ENCODE measurements at regions of chr19 and their contacts with region 1.

Region 1: GRCh38 chr19:45092747-45093678 is at the start of gene PPP1R37:
- DNase-seq: peak; percentile 81
- ATAC-seq: peak; percentile 69
- H3K4me3 Mint-ChIP-seq: peak within 1 kb of the TSS; percentile 93
- H3K27ac Mint-ChIP-seq: peak within 1 kb of the TSS; percentile 99
- H3K4me1 Mint-ChIP-seq: peaks cover 54% of the 10 kb centered on the region
- H3K27me3 Mint-ChIP-seq: no peaks in the 10 kb centered on the region
- CTCF ChIP-seq: no peak
- total RNA-seq, gene PPP1R37: 18.8 and 27.2 TPM in 2 replicates

Region 2: GRCh38 chr19:44476559-44477408 is 616.2 kb before region 1 on chr19:
- CTCF ChIA-PET with region 1: no interaction called
- POLR2A ChIA-PET with region 1: no interaction called
- intact Hi-C with region 1: no loop called
- DNase-seq: no peak
- ATAC-seq: no peak
- H3K4me3 Mint-ChIP-seq: no peak overlapping the region
- H3K27ac Mint-ChIP-seq: peak overlapping the region; percentile 68
- H3K4me1 Mint-ChIP-seq: no peaks in the 10 kb centered on the region
- H3K27me3 Mint-ChIP-seq: no peaks in the 10 kb centered on the region
- CTCF ChIP-seq: no peak

Region 3: DNA sequence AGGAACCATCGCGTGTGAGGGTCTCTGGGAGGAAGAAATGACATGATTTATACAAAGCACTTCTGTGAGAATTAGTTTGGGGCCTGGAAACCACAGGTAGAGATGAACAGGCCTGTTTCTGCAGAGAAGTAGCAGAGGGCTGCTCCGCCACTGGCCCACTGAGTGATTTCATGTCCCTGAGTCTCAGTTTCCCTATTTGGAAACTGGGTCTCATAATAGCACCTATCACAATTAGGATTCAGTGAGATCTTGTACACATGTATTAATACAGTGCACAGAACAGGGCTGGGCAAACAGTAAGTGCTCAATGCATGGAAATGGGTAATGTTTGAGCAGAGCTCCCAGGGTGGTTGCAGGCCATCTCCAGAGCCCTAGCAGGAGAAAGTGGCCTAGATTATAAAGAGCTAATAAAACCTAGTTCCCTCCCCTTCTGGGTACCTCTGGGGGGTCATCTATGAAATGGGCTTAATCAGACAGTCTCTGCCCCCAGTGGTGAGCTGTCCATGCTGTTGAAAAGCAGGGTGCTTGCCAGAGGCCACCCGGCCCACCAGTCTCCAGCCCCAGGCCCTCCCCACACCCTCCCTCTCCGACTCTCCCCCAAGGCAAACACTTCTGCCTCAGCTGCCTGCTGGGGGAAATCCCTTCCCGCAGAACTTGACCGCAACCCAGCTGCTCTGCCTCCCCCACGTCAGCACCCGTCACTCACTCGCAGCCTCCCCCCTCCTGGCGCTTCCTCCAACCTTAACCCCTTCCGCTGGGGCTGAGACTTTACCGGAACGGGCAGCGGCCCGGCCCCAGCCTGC is 340.0 kb before region 1 on chr19:
- CTCF ChIA-PET with region 1: no interaction called
- POLR2A ChIA-PET with region 1: interaction called, 4 read pairs
- intact Hi-C with region 1: loop called (anchors 5 kb)
- DNase-seq: peak; percentile 87
- ATAC-seq: peak; percentile 76
- H3K4me3 Mint-ChIP-seq: peak overlapping the region; percentile 95
- H3K27ac Mint-ChIP-seq: peak overlapping the region; percentile 96
- H3K4me1 Mint-ChIP-seq: peaks cover 68% of the 10 kb centered on the region
- H3K27me3 Mint-ChIP-seq: no peaks in the 10 kb centered on the region
- CTCF ChIP-seq: no peak

Region 4: DNA sequence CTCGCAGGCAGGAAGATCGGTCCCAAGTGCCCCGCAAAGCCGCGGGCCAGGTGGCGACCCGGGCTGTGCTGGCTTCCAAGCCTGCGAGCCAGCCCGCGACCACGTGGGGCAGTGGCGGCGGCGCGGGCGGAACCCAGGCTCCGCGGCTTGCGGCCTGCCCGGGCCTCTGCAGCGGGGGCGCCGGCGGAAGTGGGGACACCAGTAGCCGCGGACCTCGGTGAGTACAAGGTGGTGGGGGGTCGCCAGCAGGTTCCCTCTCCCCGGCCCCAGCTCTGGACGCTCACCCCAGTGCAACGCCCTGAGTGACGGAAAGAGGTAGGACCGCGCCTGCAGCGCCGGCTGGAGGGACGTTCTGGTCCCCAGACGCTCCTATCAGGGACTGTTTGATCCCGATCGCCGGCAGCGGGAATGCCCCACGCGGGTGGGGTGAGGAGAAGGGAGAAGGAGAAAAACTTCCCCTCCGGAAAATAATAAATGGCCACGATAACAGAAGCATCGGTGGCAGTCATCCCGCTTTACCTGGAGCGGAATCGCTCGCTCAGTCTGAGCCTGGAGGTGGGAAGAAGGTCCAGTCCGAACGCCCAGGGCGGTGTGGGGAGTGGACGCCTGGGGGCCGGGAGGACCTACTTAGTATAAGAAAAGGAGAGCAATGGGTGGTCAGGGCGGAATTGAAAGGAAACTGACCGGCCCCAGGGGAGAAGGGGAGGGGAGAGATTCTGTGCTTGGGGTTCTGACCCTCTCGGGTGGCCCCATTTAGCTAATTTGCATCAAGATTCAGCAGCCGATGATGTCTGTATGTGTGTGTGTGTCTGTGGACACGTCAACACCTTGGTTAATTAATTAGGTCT is 13.7 kb before region 1 on chr19 and contains the start of gene GEMIN7:
- CTCF ChIA-PET with region 1: no interaction called
- POLR2A ChIA-PET with region 1: interaction called, 75 read pairs
- intact Hi-C with region 1: loop called (anchors 1 kb)
- DNase-seq: peak; percentile 85
- ATAC-seq: peak; percentile 33
- H3K4me3 Mint-ChIP-seq: peak within 1 kb of the TSS; percentile 97
- H3K27ac Mint-ChIP-seq: peak within 1 kb of the TSS; percentile 90
- H3K4me1 Mint-ChIP-seq: peaks cover 60% of the 10 kb centered on the region
- H3K27me3 Mint-ChIP-seq: no peaks in the 10 kb centered on the region
- CTCF ChIP-seq: no peak
- total RNA-seq, gene GEMIN7: 37.0 and 38.7 TPM in 2 replicates

Region 5: GRCh38 chr19:45125926-45126493 is 33.0 kb after region 1 on chr19:
- CTCF ChIA-PET with region 1: no interaction called
- POLR2A ChIA-PET with region 1: interaction called, 5 read pairs
- intact Hi-C with region 1: loop called (anchors 5 kb)
- DNase-seq: peak; percentile 52
- ATAC-seq: peak; percentile 83
- H3K4me3 Mint-ChIP-seq: no peak overlapping the region
- H3K27ac Mint-ChIP-seq: no peak overlapping the region
- H3K4me1 Mint-ChIP-seq: peaks cover 37% of the 10 kb centered on the region
- H3K27me3 Mint-ChIP-seq: no peaks in the 10 kb centered on the region
- CTCF ChIP-seq: no peak

Region 6: DNA sequence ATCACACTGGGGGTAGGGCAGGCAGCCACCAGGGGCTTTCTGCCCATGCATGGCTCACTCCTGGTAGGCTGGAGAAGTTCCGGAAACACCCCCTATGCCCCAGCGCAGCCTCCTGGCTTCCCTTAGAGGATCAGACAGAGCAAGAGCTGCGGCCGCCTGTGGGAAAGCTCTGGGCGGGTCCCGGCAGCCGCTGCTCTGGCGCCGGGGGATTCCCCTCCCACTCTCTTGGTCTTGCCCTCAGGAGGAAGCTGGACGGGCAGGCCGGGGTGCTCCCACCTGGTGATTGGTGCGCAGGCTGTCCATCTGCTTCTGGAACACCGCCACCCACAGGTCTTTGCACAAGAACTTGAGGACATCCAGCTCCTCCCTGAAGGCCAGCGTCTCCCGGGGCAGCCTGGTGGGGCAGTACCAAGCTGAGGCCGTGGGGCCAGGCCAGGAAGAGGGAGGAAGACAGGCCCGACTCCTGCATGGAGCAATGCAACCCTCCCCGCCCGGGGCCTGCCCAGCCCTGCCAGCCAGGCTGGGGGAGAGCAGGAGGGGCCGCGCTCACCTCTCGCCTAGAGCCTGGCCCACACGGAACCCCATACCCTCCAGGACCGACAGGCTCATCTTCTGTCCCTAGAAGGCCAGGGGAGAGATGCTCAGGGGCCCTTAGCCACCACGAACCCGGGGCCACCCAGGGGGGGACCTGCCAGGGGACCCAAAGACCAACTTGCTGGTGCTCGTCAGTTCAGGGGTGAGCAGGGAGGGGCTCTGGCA is 71.7 kb after region 1 on chr19:
- CTCF ChIA-PET with region 1: interaction called, 3 read pairs
- POLR2A ChIA-PET with region 1: interaction called, 10 read pairs
- intact Hi-C with region 1: no loop called
- DNase-seq: peak; percentile 49
- ATAC-seq: peak; percentile 85
- H3K4me3 Mint-ChIP-seq: peak overlapping the region; percentile 24
- H3K27ac Mint-ChIP-seq: no peak overlapping the region
- H3K4me1 Mint-ChIP-seq: peaks cover 17% of the 10 kb centered on the region
- H3K27me3 Mint-ChIP-seq: peaks cover 8% of the 10 kb centered on the region
- CTCF ChIP-seq: no peak